Endothelial cell of umbilical vein (primary cell): ENCODE measurements at regions of chr2 and their contacts with region 1.

Region 1: DNA sequence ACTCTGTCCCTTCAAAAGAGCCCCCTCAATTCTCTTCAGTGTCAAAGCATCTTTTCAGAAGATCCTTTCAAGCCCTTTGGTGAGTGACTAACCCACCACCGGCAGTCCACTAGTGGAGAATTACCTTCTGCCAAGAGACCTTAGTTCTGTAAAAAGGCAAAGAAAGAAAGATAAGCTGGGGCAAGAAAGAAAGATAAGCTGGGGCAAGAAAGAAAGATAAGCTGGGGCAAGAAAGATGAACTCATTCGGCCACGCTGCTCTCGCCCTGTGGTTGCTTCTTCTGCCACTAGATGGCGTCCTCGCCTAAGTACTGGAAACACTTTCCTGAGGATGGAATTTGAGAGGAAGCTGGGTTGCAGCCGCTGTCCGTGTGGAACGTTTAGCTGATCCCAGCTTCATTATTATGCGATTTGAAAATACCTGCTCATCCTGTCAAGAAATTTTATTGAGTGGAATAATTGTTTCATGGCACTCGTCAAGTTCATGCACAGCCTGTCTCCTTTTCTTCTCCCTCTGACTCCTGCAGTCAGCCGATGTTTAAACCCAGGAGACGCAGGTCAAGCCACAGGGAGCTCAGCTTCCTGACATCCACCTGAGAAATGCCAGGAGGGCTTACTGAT is 17.3 kb upstream of the ANXA4 start:
- DNase-seq: peak; percentile 80
- H3K4me3 ChIP-seq: peak overlapping the region in 1 of 3 experiments; percentile 55
- H3K27ac ChIP-seq: no peak overlapping the region
- H3K4me1 ChIP-seq: peaks cover 2% of the 10 kb centered on the region
- H3K27me3 ChIP-seq: no peaks in the 10 kb centered on the region
- CTCF ChIP-seq: peak; percentile 87 to 88
- POLR2A ChIP-seq: no peak

Region 2: GRCh38 chr2:69581774-69582581 is 142.7 kb before region 1 on chr2:
- CTCF ChIA-PET with region 1: interaction called, 14 read pairs
- POLR2A ChIA-PET with region 1: no interaction called
- dilution Hi-C with region 1: no loop called
- intact Hi-C with region 1: no loop called
- DNase-seq: no peak
- H3K4me3 ChIP-seq: no peak overlapping the region
- H3K27ac ChIP-seq: no peak overlapping the region
- H3K4me1 ChIP-seq: peaks cover 6% of the 10 kb centered on the region
- H3K27me3 ChIP-seq: no peaks in the 10 kb centered on the region
- CTCF ChIP-seq: no peak
- POLR2A ChIP-seq: no peak

Region 3: GRCh38 chr2:69755862-69756467 is 31.3 kb after region 1 on chr2:
- CTCF ChIA-PET with region 1: interaction called, 32 read pairs
- POLR2A ChIA-PET with region 1: no interaction called
- dilution Hi-C with region 1: no loop called
- intact Hi-C with region 1: no loop called
- DNase-seq: peak; percentile 13
- H3K4me3 ChIP-seq: no peak overlapping the region
- H3K27ac ChIP-seq: no peak overlapping the region
- H3K4me1 ChIP-seq: peaks cover 4% of the 10 kb centered on the region
- H3K27me3 ChIP-seq: no peaks in the 10 kb centered on the region
- CTCF ChIP-seq: no peak
- POLR2A ChIP-seq: no peak

Region 4: GRCh38 chr2:69816923-69817542 is 92.4 kb after region 1 on chr2:
- CTCF ChIA-PET with region 1: interaction called, 784 read pairs
- POLR2A ChIA-PET with region 1: interaction called, 4 read pairs
- dilution Hi-C with region 1: no loop called
- intact Hi-C with region 1: loop called (anchors 1 kb)
- DNase-seq: peak; percentile 88
- H3K4me3 ChIP-seq: no peak overlapping the region
- H3K27ac ChIP-seq: no peak overlapping the region
- H3K4me1 ChIP-seq: peaks cover 28% of the 10 kb centered on the region
- H3K27me3 ChIP-seq: no peaks in the 10 kb centered on the region
- CTCF ChIP-seq: peak; percentile 71 to 72
- POLR2A ChIP-seq: no peak

Region 5: GRCh38 chr2:69863298-69863697 is 138.6 kb after region 1 on chr2:
- CTCF ChIA-PET with region 1: interaction called, 26 read pairs
- POLR2A ChIA-PET with region 1: no interaction called
- dilution Hi-C with region 1: no loop called
- intact Hi-C with region 1: no loop called
- DNase-seq: no peak
- H3K4me3 ChIP-seq: no peak overlapping the region
- H3K27ac ChIP-seq: no peak overlapping the region
- H3K4me1 ChIP-seq: no peaks in the 10 kb centered on the region
- H3K27me3 ChIP-seq: no peaks in the 10 kb centered on the region
- CTCF ChIP-seq: no peak
- POLR2A ChIP-seq: no peak

Region 6: DNA sequence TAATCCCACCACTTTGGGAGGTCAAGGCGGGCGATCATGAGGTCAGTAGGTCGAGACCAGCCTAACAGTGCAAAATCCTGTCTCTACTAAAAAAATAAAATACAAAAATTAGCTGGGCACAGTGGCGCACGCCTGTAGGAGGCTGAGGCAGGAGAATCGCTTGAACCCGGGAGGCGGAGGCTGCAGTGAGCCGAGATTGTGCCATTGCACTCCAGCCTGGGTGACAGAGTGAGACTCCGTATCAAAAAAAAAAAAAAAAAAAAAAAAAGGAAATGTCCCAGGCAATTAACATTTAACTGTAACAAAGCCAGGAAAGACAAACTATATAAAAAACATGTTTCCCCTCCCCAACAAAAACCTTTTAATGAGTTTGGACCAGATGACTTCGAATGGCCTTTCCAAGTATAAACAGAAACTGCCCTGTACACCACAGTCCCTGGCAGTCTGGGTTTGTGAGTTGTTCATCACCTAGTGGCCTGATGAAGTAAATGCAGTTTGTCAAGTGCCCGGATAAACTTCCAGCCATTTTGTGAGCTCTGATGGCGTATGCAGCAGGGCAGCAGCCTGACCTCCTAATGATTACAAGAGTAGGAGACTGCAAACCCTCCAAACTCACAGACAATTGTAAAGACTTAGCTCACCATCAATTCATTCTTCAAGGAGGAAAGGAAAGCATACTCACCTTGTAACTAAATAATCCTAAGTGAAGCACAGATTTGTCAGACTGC is 346.1 kb after region 1 on chr2:
- CTCF ChIA-PET with region 1: interaction called, 18 read pairs
- POLR2A ChIA-PET with region 1: no interaction called
- dilution Hi-C with region 1: no loop called
- intact Hi-C with region 1: no loop called
- DNase-seq: peak; percentile 88
- H3K4me3 ChIP-seq: no peak overlapping the region
- H3K27ac ChIP-seq: no peak overlapping the region
- H3K4me1 ChIP-seq: peaks cover 3% of the 10 kb centered on the region
- H3K27me3 ChIP-seq: no peaks in the 10 kb centered on the region
- CTCF ChIP-seq: peak; percentile 75 to 81
- POLR2A ChIP-seq: no peak

Region 7: GRCh38 chr2:70270323-70270722 is 545.7 kb after region 1 on chr2:
- CTCF ChIA-PET with region 1: no interaction called
- POLR2A ChIA-PET with region 1: no interaction called
- dilution Hi-C with region 1: no loop called
- intact Hi-C with region 1: no loop called
- DNase-seq: no peak
- H3K4me3 ChIP-seq: no peak overlapping the region
- H3K27ac ChIP-seq: no peak overlapping the region
- H3K4me1 ChIP-seq: no peaks in the 10 kb centered on the region
- H3K27me3 ChIP-seq: no peaks in the 10 kb centered on the region
- CTCF ChIP-seq: no peak
- POLR2A ChIP-seq: no peak

Region 8: GRCh38 chr2:70403267-70404053 is 678.8 kb after region 1 on chr2:
- CTCF ChIA-PET with region 1: no interaction called
- POLR2A ChIA-PET with region 1: no interaction called
- dilution Hi-C with region 1: no loop called
- intact Hi-C with region 1: no loop called
- DNase-seq: no peak
- H3K4me3 ChIP-seq: no peak overlapping the region
- H3K27ac ChIP-seq: no peak overlapping the region
- H3K4me1 ChIP-seq: no peaks in the 10 kb centered on the region
- H3K27me3 ChIP-seq: peaks cover 9 to 12% of the 10 kb centered on the region in 2 experiments
- CTCF ChIP-seq: no peak
- POLR2A ChIP-seq: no peak